Upper lobe of right lung (tissue), 1 donor: ENCODE measurements at regions of chr12 and their contacts with region 1.

Region 1: DNA sequence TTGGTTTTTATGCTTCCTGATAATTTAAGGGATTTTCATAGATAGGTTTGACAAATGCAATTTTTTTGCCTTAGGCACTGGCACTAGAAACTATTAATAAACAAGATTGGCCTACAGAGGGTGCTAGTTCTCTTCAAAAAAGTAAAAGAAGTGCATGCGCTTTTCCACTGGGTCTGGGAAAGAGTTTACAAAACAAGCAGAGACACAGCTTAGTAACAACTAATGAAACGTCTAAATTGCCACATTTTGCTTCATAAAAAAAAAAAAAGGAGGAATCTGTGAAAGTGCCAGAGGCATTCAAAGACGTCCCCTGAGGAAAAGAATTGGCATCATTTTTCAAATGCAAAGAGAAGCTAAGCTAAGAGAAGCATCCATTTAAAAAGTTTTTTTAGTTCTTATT is 58.3 kb upstream of the EEA1 start:
- DNase-seq: no peak
- ATAC-seq: peak; percentile 90
- H3K4me3 ChIP-seq: no peak overlapping the region
- H3K27ac ChIP-seq: peak overlapping the region; percentile 75
- H3K4me1 ChIP-seq: peaks cover 8% of the 10 kb centered on the region
- H3K27me3 ChIP-seq: no peaks in the 10 kb centered on the region
- CTCF ChIP-seq: peak; percentile 65

Region 2: DNA sequence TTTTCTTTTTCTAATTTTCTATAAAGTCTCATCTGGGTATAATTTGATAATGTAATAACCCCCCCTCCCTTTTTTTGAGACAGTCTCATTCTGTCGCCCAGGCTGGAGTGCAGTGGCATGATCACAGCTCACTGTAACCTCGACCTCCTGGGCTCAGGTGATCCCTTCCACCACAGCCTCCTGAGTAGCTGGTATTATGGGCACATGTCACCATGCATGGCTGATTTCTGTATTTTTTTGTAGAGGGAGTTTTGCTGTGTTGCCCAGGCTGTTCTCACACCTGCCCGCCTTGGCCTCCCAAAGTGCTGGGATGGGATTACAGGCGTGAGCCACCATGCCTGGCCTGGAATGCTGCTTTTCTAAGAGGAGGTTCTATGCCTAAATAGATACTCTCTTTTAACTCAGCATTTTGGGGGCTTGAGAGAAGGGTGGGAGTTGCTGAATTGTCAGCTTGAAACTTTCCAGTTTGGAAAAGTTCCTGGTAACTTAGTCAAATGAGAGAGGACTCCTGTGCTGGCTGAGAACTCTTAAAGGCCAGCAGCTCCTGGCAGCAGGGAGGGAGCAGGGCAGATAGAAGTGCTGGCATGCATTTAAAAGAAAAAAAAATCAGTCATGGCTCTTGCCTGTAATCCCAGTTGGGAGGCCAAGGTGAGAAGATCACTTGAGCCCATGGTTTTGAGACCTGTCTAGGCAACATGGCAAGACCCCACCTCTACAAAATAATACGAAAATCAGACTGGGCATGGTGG is 403.4 kb after region 1 on chr12:
- intact Hi-C with region 1: loop called (anchors 10 kb)
- DNase-seq: no peak
- ATAC-seq: no peak
- H3K4me3 ChIP-seq: no peak overlapping the region
- H3K27ac ChIP-seq: peak overlapping the region; percentile 2
- H3K4me1 ChIP-seq: peaks cover 19% of the 10 kb centered on the region
- H3K27me3 ChIP-seq: no peaks in the 10 kb centered on the region
- CTCF ChIP-seq: no peak